ENCODE measurements at regions of chr1 and their contacts with region 1.

Region 1: GRCh38 chr1:18913065-18913835 is 10.9 kb upstream of the ALDH4A1 start:
- DNase-seq: peak; percentile 85 to 89
- ATAC-seq: peak; percentile 86 to 95 (median 90)
- H3K4me3 ChIP-seq: no peak overlapping the region
- H3K27ac ChIP-seq: peak overlapping the region; percentile 18 to 86 (median 76)
- H3K4me1 ChIP-seq: peaks cover 4 to 45% (median 31%) of the 10 kb centered on the region in 9 donors
- H3K27me3 ChIP-seq: no peaks in the 10 kb centered on the region
- CTCF ChIP-seq: peak; percentile 93 to 100 (median 98)

Region 2: GRCh38 chr1:18949686-18950400 is 36.6 kb after region 1 on chr1:
- intact Hi-C with region 1: loop called in 7 of 10 experiments (anchors 5 to 10 kb)
- DNase-seq: peak in 1 of 2 donors; percentile 64
- ATAC-seq: peak; percentile 25 to 67 (median 48)
- H3K4me3 ChIP-seq: peak overlapping the region; percentile 7 to 53 (median 40)
- H3K27ac ChIP-seq: peak overlapping the region; percentile 66 to 94 (median 90)
- H3K4me1 ChIP-seq: peaks cover 27 to 100% (median 70%) of the 10 kb centered on the region in 9 donors
- H3K27me3 ChIP-seq: peaks cover 0 to 5% (median 0%) of the 10 kb centered on the region in 7 donors
- CTCF ChIP-seq: peak in 3 of 9 donors; percentile 18 to 40 (median 27)

Region 3: GRCh38 chr1:19074902-19075721 is 161.9 kb after region 1 on chr1:
- intact Hi-C with region 1: loop called in 2 of 10 experiments (anchors 5 to 10 kb)
- DNase-seq: peak in 1 of 2 donors; percentile 55
- ATAC-seq: peak; percentile 26 to 73 (median 52)
- H3K4me3 ChIP-seq: no peak overlapping the region
- H3K27ac ChIP-seq: peak overlapping the region in 1 of 10 donors; percentile 4
- H3K4me1 ChIP-seq: peaks cover 0 to 28% (median 26%) of the 10 kb centered on the region in 9 donors
- H3K27me3 ChIP-seq: no peaks in the 10 kb centered on the region
- CTCF ChIP-seq: no peak